GM12878 (cell line): ENCODE measurements at regions of chr21 and their contacts with region 1.

Region 1: DNA sequence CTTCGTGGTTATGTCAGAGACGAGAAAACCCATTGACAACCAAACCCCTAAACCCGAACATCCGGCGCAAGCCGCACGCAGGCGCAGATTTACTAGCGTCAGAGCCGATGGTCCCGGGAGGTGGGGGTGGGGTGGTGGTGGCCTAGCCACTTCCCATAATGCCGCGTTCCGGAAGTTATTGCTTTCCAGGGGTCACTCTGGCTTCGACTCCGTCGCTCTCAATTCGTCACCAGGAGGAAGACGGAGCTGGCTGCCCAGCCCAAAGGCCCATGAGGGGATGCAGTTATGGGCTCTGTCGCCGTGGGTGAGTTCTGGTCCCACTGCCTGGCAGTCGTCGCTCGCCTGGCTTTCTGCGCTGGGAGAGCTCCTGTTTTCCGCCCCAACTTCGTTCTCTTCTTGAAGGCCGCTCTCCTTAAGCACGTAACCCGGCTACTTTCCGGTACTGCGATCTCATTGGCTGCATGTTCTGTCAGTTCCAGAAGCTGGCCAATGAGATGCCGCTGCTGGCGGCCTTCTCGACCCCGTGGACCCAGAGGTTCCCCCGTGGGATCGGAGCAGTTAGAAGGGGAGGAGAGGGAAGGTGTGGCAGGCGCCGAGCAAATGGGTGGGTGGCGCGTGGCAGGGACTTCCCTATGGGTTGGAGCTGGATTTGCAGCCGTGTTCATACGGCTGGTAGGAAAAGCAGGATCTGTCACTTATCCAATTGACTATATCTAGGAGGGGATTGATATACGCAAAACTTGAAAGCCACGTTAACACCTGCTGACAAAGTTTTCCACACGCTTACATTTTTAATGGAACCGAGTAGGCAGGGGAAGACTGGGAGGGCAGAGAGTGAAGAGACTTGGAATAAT is at the start of gene USP16:
- DNase-seq: peak; percentile 99
- ATAC-seq: peak; percentile 98
- H3K4me3 ChIP-seq: peak within 1 kb of the TSS; percentile 89
- H3K27ac ChIP-seq: peak within 1 kb of the TSS; percentile 99
- H3K4me1 ChIP-seq: peaks cover 4% of the 10 kb centered on the region; the same call in 1 of the 2 replicates
- H3K27me3 ChIP-seq: no peaks in the 10 kb centered on the region
- CTCF ChIP-seq: no peak
- EP300 ChIP-seq: peak in 1 of 2 experiments; percentile 21; a peak in 1 of 4 replicates
- POLR2A ChIP-seq: peak; percentile 95
- RAD21 ChIP-seq: no peak
- polyA plus RNA-seq, gene USP16: 52.6 to 68.7 TPM

Region 2: GRCh38 chr21:28805885-28806284 is 218.8 kb before region 1 on chr21:
- CTCF ChIA-PET with region 1: no interaction called
- POLR2A ChIA-PET with region 1: no interaction called
- RAD21 ChIA-PET with region 1: no interaction called
- SMC1A ChIA-PET with region 1: no interaction called
- in situ Hi-C with region 1: no loop called
- intact Hi-C with region 1: no loop called
- DNase-seq: no peak
- ATAC-seq: no peak
- H3K4me3 ChIP-seq: no peak overlapping the region
- H3K27ac ChIP-seq: no peak overlapping the region
- H3K4me1 ChIP-seq: no peaks in the 10 kb centered on the region
- H3K27me3 ChIP-seq: no peaks in the 10 kb centered on the region
- CTCF ChIP-seq: no peak
- EP300 ChIP-seq: no peak
- POLR2A ChIP-seq: no peak
- RAD21 ChIP-seq: no peak

Region 3: GRCh38 chr21:28992526-28993292 is 32.0 kb before region 1 on chr21 and contains the start of gene LTN1:
- CTCF ChIA-PET with region 1: interaction called, 4 read pairs
- POLR2A ChIA-PET with region 1: interaction called, 22 read pairs
- RAD21 ChIA-PET with region 1: interaction called, 16 read pairs
- SMC1A ChIA-PET with region 1: interaction called, 14 read pairs
- in situ Hi-C with region 1: no loop called
- intact Hi-C with region 1: loop called (anchors 1 kb)
- DNase-seq: peak; percentile 99
- ATAC-seq: peak; percentile 95
- H3K4me3 ChIP-seq: peak within 1 kb of the TSS; percentile 97
- H3K27ac ChIP-seq: peak within 1 kb of the TSS; percentile 73
- H3K4me1 ChIP-seq: peaks cover 3% of the 10 kb centered on the region
- H3K27me3 ChIP-seq: no peaks in the 10 kb centered on the region
- CTCF ChIP-seq: no peak
- EP300 ChIP-seq: peak in 1 of 2 experiments; percentile 28; a peak in 1 of 4 replicates
- POLR2A ChIP-seq: peak; percentile 86
- RAD21 ChIP-seq: 0 out of 2 replicates have a peak, but pooled peaks have one; percentile 4
- polyA plus RNA-seq, gene LTN1: 3.5 to 10.1 TPM

Region 4: DNA sequence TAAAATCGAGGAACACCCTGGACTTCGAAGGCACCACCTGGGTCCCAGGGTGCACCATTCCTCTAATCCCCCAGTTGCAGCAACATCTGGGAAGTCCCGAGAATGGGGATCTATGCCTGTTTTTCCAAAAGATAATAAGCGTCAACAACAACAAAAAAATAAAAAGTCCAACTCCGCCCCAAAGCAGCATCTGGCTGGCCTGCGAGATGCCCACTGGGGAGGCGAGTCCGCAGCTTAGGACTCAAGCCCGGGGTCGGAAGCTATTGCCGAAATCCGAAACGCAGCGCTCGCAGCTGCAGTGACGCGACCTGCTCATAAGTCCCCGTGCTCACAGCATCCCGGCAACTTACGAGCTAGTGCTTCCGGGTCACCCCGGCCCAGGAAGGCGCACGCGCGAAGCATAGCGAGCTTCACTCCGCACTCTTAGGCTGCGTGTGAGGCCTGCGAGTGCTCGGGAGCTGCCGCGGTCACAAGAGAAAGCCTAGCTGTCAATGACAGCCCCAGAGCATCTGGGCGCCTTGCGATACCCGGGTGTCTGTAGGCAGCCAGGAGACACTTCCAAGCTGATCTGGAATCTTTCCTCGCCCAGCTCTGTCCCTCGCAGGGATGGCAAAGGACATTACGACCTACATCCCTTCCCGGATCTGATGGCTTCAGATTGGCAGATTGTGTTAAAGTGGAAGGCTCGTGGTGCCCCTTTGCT is 22.1 kb before region 1 on chr21:
- CTCF ChIA-PET with region 1: interaction called, 6 read pairs
- POLR2A ChIA-PET with region 1: interaction called, 41 read pairs
- RAD21 ChIA-PET with region 1: interaction called, 24 read pairs
- SMC1A ChIA-PET with region 1: interaction called, 9 read pairs
- in situ Hi-C with region 1: no loop called
- intact Hi-C with region 1: loop called (anchors 1 kb)
- DNase-seq: peak; percentile 89
- ATAC-seq: peak; percentile 100
- H3K4me3 ChIP-seq: peak overlapping the region; percentile 75
- H3K27ac ChIP-seq: peak overlapping the region; percentile 96
- H3K4me1 ChIP-seq: peaks cover 3% of the 10 kb centered on the region
- H3K27me3 ChIP-seq: no peaks in the 10 kb centered on the region
- CTCF ChIP-seq: no peak
- EP300 ChIP-seq: no peak
- POLR2A ChIP-seq: peak; percentile 99
- RAD21 ChIP-seq: no peak

Region 5: GRCh38 chr21:29064850-29065481 is 40.3 kb after region 1 on chr21:
- CTCF ChIA-PET with region 1: interaction called, 3 read pairs
- POLR2A ChIA-PET with region 1: interaction called, 10 read pairs
- RAD21 ChIA-PET with region 1: interaction called, 8 read pairs
- SMC1A ChIA-PET with region 1: interaction called, 10 read pairs
- in situ Hi-C with region 1: no loop called
- intact Hi-C with region 1: loop called (anchors 5 kb)
- DNase-seq: peak; percentile 52
- ATAC-seq: peak; percentile 96
- H3K4me3 ChIP-seq: peak overlapping the region; percentile 50; the same call in 1 of the 2 replicates
- H3K27ac ChIP-seq: peak overlapping the region; percentile 70
- H3K4me1 ChIP-seq: peaks cover 6% of the 10 kb centered on the region
- H3K27me3 ChIP-seq: no peaks in the 10 kb centered on the region
- CTCF ChIP-seq: no peak
- EP300 ChIP-seq: peak; percentile 28 to 84; a peak in 2 of 4 replicates
- POLR2A ChIP-seq: no peak
- RAD21 ChIP-seq: no peak

Region 6: GRCh38 chr21:29073222-29074006 is 48.7 kb after region 1 on chr21 and contains the start of gene CCT8:
- CTCF ChIA-PET with region 1: interaction called, 4 read pairs
- POLR2A ChIA-PET with region 1: interaction called, 20 read pairs
- RAD21 ChIA-PET with region 1: interaction called, 11 read pairs
- SMC1A ChIA-PET with region 1: interaction called, 7 read pairs
- in situ Hi-C with region 1: no loop called
- intact Hi-C with region 1: loop called (anchors 5 kb)
- DNase-seq: peak; percentile 98
- ATAC-seq: peak; percentile 87
- H3K4me3 ChIP-seq: peak within 1 kb of the TSS; percentile 91
- H3K27ac ChIP-seq: peak within 1 kb of the TSS; percentile 98
- H3K4me1 ChIP-seq: no peaks in the 10 kb centered on the region
- H3K27me3 ChIP-seq: no peaks in the 10 kb centered on the region
- CTCF ChIP-seq: no peak
- EP300 ChIP-seq: peak in 1 of 2 experiments; percentile 49; a peak in 1 of 4 replicates
- POLR2A ChIP-seq: peak; percentile 100
- RAD21 ChIP-seq: no peak
- polyA plus RNA-seq, gene CCT8: 510 to 696 TPM

Region 7: GRCh38 chr21:29217818-29218291 is 193.2 kb after region 1 on chr21:
- CTCF ChIA-PET with region 1: no interaction called
- POLR2A ChIA-PET with region 1: no interaction called
- RAD21 ChIA-PET with region 1: no interaction called
- SMC1A ChIA-PET with region 1: no interaction called
- in situ Hi-C with region 1: no loop called
- intact Hi-C with region 1: no loop called
- DNase-seq: no peak
- ATAC-seq: no peak
- H3K4me3 ChIP-seq: no peak overlapping the region
- H3K27ac ChIP-seq: no peak overlapping the region
- H3K4me1 ChIP-seq: no peaks in the 10 kb centered on the region
- H3K27me3 ChIP-seq: no peaks in the 10 kb centered on the region
- CTCF ChIP-seq: no peak
- EP300 ChIP-seq: no peak
- POLR2A ChIP-seq: no peak
- RAD21 ChIP-seq: no peak

Region 8: GRCh38 chr21:29504751-29505321 is 480.1 kb after region 1 on chr21:
- CTCF ChIA-PET with region 1: no interaction called
- POLR2A ChIA-PET with region 1: no interaction called
- RAD21 ChIA-PET with region 1: no interaction called
- SMC1A ChIA-PET with region 1: no interaction called
- in situ Hi-C with region 1: no loop called
- intact Hi-C with region 1: no loop called
- DNase-seq: no peak
- ATAC-seq: no peak
- H3K4me3 ChIP-seq: no peak overlapping the region
- H3K27ac ChIP-seq: no peak overlapping the region
- H3K4me1 ChIP-seq: no peaks in the 10 kb centered on the region
- H3K27me3 ChIP-seq: no peaks in the 10 kb centered on the region
- CTCF ChIP-seq: no peak
- EP300 ChIP-seq: no peak
- POLR2A ChIP-seq: no peak
- RAD21 ChIP-seq: no peak

Region 9: DNA sequence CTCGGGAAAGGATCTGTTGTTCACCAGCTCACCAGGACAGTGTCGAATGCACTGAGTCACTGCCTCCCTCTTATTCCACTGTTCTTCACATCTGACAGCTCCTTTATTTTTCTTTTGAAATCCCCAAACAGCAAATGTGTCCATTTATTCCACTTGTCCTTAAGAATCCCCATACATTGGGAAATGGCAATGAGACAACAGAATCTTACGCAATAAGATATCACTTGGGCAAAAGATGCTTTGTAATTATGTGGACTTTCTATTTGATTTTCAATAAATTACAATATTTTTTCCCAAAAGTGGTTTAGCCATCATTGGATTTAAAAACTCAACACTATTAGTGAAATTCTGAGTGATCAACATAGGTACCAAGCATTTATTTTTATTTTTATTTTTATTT is 1614.0 kb after region 1 on chr21:
- CTCF ChIA-PET with region 1: no interaction called
- POLR2A ChIA-PET with region 1: no interaction called
- RAD21 ChIA-PET with region 1: no interaction called
- SMC1A ChIA-PET with region 1: no interaction called
- in situ Hi-C with region 1: no loop called
- intact Hi-C with region 1: no loop called
- DNase-seq: no peak
- ATAC-seq: no peak
- H3K4me3 ChIP-seq: no peak overlapping the region
- H3K27ac ChIP-seq: no peak overlapping the region
- H3K4me1 ChIP-seq: no peaks in the 10 kb centered on the region
- H3K27me3 ChIP-seq: no peaks in the 10 kb centered on the region
- CTCF ChIP-seq: no peak
- EP300 ChIP-seq: no peak
- POLR2A ChIP-seq: no peak
- RAD21 ChIP-seq: no peak